ENCODE measurements at regions of chr2 and their contacts with region 1.

Region 1: DNA sequence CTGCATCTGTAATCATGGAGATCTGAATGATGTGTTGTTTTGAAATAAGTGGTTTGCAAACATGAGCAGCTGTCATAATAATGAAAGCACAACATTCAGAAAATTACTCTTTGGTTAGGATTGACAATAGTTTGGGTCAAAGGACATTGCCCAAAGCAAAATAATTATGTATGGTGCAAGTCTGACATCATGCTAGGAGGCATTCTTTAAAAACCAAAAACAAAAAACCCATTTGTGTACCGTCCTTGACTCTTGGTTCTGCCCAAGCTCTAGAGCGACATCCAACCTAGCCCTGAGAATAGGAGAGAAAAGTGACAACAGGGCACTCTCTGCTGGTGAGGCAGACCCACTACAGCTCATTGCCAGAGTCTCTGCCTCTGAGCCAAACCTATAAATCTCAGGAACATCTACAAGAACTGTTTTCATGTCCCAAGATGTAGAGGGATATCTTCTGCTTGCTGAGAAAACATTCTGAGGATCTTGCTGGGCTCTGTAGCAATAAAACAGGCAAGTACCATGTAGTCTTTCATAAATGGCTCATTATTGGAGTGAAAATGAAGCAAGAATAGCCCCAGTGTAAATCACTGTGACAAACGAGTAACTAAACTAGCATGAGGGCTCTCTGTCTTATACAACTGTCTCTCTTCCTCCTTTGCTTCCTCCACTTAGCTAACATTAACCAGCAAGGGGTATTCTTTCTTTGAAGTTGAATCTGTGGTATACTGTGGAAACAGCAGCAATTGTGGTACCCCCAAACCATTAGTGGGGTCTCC is 266.8 kb upstream of the CXCR4 start:
- DNase-seq: peak; percentile 27 to 83 (median 46)
- ATAC-seq: peak; percentile 57
- H3K4me3 ChIP-seq: no peak overlapping the region
- H3K4me3 Mint-ChIP-seq: no peak overlapping the region
- H3K27ac ChIP-seq: no peak overlapping the region
- H3K27ac Mint-ChIP-seq: peak overlapping the region; percentile 79
- H3K4me1 ChIP-seq: peaks cover 24% of the 10 kb centered on the region
- H3K4me1 Mint-ChIP-seq: peaks cover 37% of the 10 kb centered on the region
- H3K27me3 ChIP-seq: no peaks in the 10 kb centered on the region
- H3K27me3 Mint-ChIP-seq: no peaks in the 10 kb centered on the region
- CTCF ChIP-seq: peak; percentile 67

Region 2: DNA sequence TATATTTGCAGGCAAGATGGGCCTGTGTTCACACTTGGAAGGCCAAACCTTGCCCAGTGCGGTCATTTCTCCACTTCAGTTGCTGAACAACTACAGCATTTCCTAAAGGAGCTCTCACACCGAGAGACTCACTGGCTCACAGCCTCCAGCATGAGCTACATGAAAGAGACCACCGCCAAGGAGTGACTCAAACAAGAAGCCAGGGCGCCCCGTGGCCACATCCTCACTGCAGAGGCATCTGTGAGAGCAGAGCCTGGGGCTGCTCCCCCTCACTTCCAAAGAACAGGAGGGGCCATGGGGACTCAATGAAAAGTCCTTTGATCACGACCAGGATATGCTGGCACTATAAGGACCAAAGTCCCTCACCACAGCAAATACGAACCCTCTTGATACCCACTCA is 1715.9 kb before region 1 on chr2:
- CTCF ChIA-PET with region 1: no interaction called
- POLR2A ChIA-PET with region 1: no interaction called
- intact Hi-C with region 1: loop called in 1 of 2 experiments (anchors 10 kb)
- DNase-seq: peak; percentile 61 to 93 (median 79)
- ATAC-seq: peak; percentile 72
- H3K4me3 ChIP-seq: no peak overlapping the region
- H3K4me3 Mint-ChIP-seq: peak overlapping the region; percentile 69
- H3K27ac ChIP-seq: peak overlapping the region in 1 of 2 donors; percentile 36
- H3K27ac Mint-ChIP-seq: peak overlapping the region; percentile 85
- H3K4me1 ChIP-seq: peaks cover 62% of the 10 kb centered on the region
- H3K4me1 Mint-ChIP-seq: peaks cover 86% of the 10 kb centered on the region
- H3K27me3 ChIP-seq: no peaks in the 10 kb centered on the region
- H3K27me3 Mint-ChIP-seq: peaks cover 4% of the 10 kb centered on the region
- CTCF ChIP-seq: no peak

Region 3: DNA sequence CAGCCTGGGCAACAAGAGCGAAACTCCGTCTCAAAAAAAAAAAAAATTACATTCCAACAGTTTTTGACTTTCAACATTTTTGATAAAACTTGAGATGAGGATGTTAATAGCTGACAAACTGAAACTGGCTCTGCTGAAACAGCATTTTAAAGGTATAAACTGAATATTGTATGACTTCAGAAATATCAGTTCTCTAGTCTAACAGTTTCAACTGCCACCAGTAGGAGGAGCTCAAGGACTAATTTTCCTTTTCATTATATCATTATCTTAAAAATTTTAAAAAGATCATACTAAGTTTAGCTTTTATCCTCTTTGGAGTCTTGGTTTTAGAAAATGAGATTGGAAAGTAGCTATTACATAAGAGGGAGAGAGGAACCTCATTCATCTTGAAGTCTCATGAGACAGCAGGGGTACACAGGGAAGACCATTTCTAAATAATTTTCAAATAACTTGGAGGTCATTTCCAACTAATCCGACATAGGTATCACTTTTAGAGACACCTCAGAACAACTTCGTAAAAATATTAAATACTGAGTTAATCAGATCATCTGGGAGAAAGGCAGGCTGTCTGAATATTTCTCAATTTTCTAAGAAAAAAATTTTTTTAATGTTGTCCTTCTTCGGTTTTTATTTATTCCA is 470.9 kb before region 1 on chr2:
- CTCF ChIA-PET with region 1: interaction called, 49 read pairs
- POLR2A ChIA-PET with region 1: interaction called, 24 read pairs
- intact Hi-C with region 1: loop called (anchors 1 kb)
- DNase-seq: peak in 11 of 14 experiments; percentile 7 to 83 (median 29)
- ATAC-seq: peak; percentile 72
- H3K4me3 ChIP-seq: no peak overlapping the region
- H3K4me3 Mint-ChIP-seq: no peak overlapping the region
- H3K27ac ChIP-seq: no peak overlapping the region
- H3K27ac Mint-ChIP-seq: peak overlapping the region; percentile 11
- H3K4me1 ChIP-seq: no peaks in the 10 kb centered on the region
- H3K4me1 Mint-ChIP-seq: peaks cover 4% of the 10 kb centered on the region
- H3K27me3 ChIP-seq: no peaks in the 10 kb centered on the region
- H3K27me3 Mint-ChIP-seq: no peaks in the 10 kb centered on the region
- CTCF ChIP-seq: peak; percentile 90

Region 4: DNA sequence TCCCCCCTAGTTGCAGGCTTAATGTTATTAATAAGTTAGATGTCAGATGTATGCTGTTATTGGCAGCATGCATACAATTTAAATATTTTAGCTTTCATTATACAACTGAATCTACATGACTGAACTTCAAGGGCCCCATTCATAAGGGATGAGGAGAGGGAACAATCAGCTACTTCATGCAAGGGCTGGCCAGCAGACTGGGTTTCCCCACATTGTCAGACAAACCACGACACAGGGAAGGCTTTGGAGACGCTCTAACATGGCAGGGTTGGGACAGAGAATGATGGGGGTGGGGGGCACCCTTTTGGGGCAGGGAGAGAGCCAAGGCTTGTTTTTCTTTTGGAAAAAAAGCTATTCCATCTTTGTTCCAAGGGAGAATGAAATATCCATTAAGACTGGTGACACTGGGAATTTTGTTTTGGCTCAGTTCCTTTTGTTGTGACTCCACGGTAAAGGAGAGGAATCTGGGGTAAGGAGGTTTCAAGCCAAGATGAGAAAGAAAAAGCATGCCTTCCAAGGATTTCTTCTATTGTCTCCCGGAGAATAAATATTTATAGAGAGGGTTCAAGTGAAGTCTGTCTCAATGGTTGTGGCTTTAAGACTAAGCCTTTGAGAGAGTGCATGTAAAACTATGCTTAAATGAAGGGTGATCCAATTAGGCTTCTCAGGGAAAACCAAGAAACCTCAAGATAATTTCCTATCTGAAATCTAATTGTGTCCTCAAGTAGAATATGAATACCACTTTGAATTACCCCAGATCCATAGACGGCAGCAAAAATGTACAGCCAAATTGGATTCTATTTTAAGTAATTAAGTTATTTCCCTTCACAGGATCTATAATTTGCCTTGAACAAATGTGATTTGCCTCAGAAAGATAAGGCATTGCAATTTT is 272.2 kb before region 1 on chr2:
- CTCF ChIA-PET with region 1: interaction called, 4 read pairs
- POLR2A ChIA-PET with region 1: no interaction called
- intact Hi-C with region 1: loop called in 1 of 2 experiments (anchors 1 kb)
- DNase-seq: peak in 3 of 14 experiments; percentile 28 to 57 (median 44)
- ATAC-seq: no peak
- H3K4me3 ChIP-seq: no peak overlapping the region
- H3K4me3 Mint-ChIP-seq: peak overlapping the region; percentile 99
- H3K27ac ChIP-seq: no peak overlapping the region
- H3K27ac Mint-ChIP-seq: peak overlapping the region; percentile 97
- H3K4me1 ChIP-seq: peaks cover 19% of the 10 kb centered on the region
- H3K4me1 Mint-ChIP-seq: peaks cover 44% of the 10 kb centered on the region
- H3K27me3 ChIP-seq: no peaks in the 10 kb centered on the region
- H3K27me3 Mint-ChIP-seq: peaks cover 14% of the 10 kb centered on the region
- CTCF ChIP-seq: no peak

Region 5: DNA sequence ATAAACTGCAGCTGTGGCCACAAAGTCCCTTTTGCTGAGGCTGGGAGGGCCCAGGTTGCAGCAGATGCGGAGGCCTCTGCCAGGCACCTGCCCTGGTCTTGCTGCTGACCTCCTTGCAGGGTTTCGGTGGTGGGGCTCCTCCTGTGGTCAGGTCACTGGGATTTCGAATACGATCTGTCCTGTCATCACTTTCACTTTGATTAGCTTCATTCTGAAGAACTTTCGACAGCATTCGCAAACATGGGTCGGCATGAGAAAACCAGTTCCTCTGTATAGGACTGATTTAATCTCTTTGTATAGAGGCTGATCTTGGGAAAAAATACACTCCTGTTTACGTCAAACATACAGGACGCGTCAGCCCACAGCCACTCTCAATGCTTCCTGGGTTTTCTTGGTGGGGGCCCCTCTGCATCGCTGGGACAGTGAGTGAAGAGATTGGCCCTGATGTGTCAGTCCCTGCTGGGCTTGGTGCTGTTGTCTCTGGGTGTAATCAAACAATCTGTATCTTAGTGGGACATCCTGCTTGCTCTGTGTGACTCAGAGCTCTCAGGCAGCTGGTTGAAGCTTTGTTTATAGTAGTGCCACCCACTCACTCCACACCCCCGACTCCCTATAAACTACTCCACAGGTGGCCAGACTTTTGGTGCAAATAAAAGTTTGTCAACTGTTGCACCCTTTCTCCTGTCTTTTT is 57.4 kb before region 1 on chr2:
- CTCF ChIA-PET with region 1: interaction called, 8 read pairs
- POLR2A ChIA-PET with region 1: interaction called, 7 read pairs
- intact Hi-C with region 1: loop called in 1 of 2 experiments (anchors 1 kb)
- DNase-seq: peak; percentile 64 to 93 (median 78)
- ATAC-seq: peak; percentile 92
- H3K4me3 ChIP-seq: peak overlapping the region; percentile 44
- H3K4me3 Mint-ChIP-seq: peak overlapping the region; percentile 79
- H3K27ac ChIP-seq: peak overlapping the region; percentile 74 to 90
- H3K27ac Mint-ChIP-seq: peak overlapping the region; percentile 90
- H3K4me1 ChIP-seq: peaks cover 54% of the 10 kb centered on the region
- H3K4me1 Mint-ChIP-seq: peaks cover 64% of the 10 kb centered on the region
- H3K27me3 ChIP-seq: no peaks in the 10 kb centered on the region
- H3K27me3 Mint-ChIP-seq: no peaks in the 10 kb centered on the region
- CTCF ChIP-seq: no peak

Region 6: DNA sequence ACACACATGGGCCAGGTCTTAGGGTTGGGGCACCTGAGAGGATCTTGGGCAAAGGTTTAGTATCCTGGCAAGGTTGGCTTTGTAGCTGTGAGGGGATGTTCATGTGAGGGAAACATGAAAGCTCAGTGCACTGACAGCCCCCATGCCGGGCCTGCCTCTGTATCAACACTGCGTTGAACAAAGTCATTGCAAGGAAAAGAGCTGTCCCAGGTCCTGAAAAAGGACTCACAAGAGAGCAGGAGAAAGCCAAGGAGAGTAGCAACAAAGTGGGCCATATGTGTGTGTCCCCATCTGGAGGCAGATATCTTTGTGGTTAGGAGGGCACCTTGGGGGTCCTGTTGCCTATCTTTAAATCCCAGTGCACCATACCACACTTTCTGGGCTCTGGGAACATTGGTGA is 142.8 kb after region 1 on chr2:
- CTCF ChIA-PET with region 1: no interaction called
- POLR2A ChIA-PET with region 1: no interaction called
- intact Hi-C with region 1: no loop called
- DNase-seq: peak in 1 of 14 experiments; percentile 4
- ATAC-seq: no peak
- H3K4me3 ChIP-seq: no peak overlapping the region
- H3K4me3 Mint-ChIP-seq: no peak overlapping the region
- H3K27ac ChIP-seq: no peak overlapping the region
- H3K27ac Mint-ChIP-seq: no peak overlapping the region
- H3K4me1 ChIP-seq: no peaks in the 10 kb centered on the region
- H3K4me1 Mint-ChIP-seq: no peaks in the 10 kb centered on the region
- H3K27me3 ChIP-seq: no peaks in the 10 kb centered on the region
- H3K27me3 Mint-ChIP-seq: peaks cover 7% of the 10 kb centered on the region
- CTCF ChIP-seq: no peak

Measured in CD4-positive, alpha-beta T cell (primary cell).